H1 (cell line): ENCODE measurements at regions of chr9 and their contacts with region 1.

Region 1: GRCh38 chr9:83544002-83544698 is 5.9 kb upstream of the FRMD3 start:
- DNase-seq: no peak
- H3K4me3 ChIP-seq: no peak overlapping the region
- H3K27ac ChIP-seq: no peak overlapping the region
- H3K4me1 ChIP-seq: no peaks in the 10 kb centered on the region
- H3K27me3 ChIP-seq: peaks cover 6 to 21% (median 16%) of the 10 kb centered on the region in 4 experiments
- CTCF ChIP-seq: peak in 2 of 3 experiments; percentile 79 to 82; a peak in 3 of 4 replicates
- EP300 ChIP-seq: no peak
- POLR2A ChIP-seq: no peak
- RAD21 ChIP-seq: peak; percentile 86 to 91

Region 2: DNA sequence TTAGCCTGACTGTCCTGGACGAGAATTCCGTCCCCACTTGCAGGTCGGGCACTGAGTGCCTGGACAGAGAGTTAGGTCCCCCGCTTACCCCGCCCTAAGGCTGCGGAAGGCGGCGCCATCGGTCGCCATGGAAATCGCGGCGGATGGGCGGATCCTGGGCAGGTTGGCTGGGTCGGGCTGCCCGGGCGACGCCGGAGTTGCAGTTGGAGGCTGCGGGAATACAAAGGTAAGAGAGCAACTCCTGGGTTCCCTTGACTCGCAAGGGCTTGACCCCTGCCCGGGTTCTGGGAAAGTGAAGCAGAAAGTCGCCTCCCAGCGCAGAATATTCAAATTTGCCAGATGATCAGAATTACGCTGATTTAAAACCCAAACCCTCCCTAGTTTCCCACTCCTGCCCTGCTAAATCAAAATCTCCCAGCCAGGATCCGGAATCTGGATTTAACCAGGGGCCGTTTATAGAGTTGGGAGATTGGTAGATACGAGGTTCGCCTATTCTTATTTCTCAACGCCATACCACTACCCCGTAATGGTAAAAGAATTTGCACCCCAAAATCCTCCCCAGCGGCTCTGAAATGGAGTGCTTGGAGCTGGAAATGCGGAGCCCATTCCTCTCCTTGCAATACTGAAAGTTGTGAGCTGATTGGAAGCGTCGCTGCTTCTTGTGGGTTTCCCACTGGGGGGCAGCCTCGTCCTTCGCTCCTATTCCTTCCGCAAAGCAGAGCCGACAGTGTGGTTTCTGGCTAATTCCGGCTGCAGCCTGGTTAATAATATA is 324.8 kb before region 1 on chr9:
- CTCF ChIA-PET with region 1: interaction called, 34 read pairs
- POLR2A ChIA-PET with region 1: no interaction called
- DNase-seq: peak; percentile 79 to 93
- H3K4me3 ChIP-seq: peak overlapping the region; percentile 47 to 76 (median 66)
- H3K27ac ChIP-seq: no peak overlapping the region
- H3K4me1 ChIP-seq: peaks cover 0 to 3% (median 0%) of the 10 kb centered on the region in 4 experiments; a peak in 2 of 7 replicates
- H3K27me3 ChIP-seq: no peaks in the 10 kb centered on the region
- CTCF ChIP-seq: peak; percentile 65 to 86 (median 78)
- EP300 ChIP-seq: no peak
- POLR2A ChIP-seq: no peak
- RAD21 ChIP-seq: peak; percentile 94 to 97

Region 3: GRCh38 chr9:83362341-83362995 is 181.7 kb before region 1 on chr9:
- CTCF ChIA-PET with region 1: interaction called, 13 read pairs
- POLR2A ChIA-PET with region 1: no interaction called
- DNase-seq: no peak
- H3K4me3 ChIP-seq: no peak overlapping the region
- H3K27ac ChIP-seq: no peak overlapping the region
- H3K4me1 ChIP-seq: no peaks in the 10 kb centered on the region; a peak in 1 of 7 replicates
- H3K27me3 ChIP-seq: no peaks in the 10 kb centered on the region
- CTCF ChIP-seq: no peak
- EP300 ChIP-seq: no peak
- POLR2A ChIP-seq: no peak
- RAD21 ChIP-seq: no peak

Region 4: DNA sequence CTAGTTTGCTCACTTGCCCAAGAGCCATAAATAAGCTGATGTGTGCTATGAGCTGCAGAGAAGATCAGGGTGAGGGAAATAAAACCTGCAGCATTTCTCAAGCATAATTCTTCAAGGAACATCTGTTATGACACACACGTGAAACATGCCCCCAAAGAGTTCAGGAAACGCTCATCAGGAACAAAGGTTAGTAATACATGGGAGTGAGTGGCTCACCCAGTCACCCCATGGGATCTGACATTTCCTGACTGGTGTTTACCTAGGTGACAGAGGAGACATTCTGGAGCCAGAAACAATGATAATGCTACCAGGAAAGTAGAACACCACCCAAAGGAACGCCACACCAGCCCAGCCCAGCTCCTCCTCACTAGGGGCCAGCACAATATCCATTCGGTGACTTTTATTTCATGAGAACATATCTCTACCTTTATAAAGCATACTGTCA is 71.9 kb before region 1 on chr9:
- CTCF ChIA-PET with region 1: interaction called, 17 read pairs
- POLR2A ChIA-PET with region 1: no interaction called
- DNase-seq: no peak
- H3K4me3 ChIP-seq: no peak overlapping the region
- H3K27ac ChIP-seq: no peak overlapping the region
- H3K4me1 ChIP-seq: peaks cover 0 to 7% (median 3%) of the 10 kb centered on the region in 4 experiments; a peak in 3 of 7 replicates
- H3K27me3 ChIP-seq: no peaks in the 10 kb centered on the region; a peak in 1 of 7 replicates
- CTCF ChIP-seq: no peak
- EP300 ChIP-seq: no peak
- POLR2A ChIP-seq: no peak
- RAD21 ChIP-seq: no peak

Region 5: DNA sequence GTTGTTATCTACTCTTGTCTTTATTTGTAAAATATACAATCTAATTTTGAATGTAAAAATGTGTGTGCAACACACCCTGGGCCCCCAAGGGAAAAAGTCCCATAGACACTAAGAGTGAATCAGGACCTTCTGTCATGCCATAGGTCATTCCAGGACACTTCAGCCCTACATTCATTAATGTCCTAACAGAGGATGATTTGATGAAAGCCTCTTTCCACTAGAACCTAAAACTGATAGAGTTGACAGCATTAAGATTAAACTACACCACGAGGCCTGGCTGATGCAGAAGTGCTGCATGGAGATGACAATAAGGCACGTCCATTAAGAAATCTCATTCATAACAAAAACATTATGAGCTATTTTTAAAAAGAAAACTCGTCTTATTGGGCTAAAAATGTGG is 52.2 kb before region 1 on chr9:
- CTCF ChIA-PET with region 1: no interaction called
- POLR2A ChIA-PET with region 1: no interaction called
- DNase-seq: no peak
- H3K4me3 ChIP-seq: no peak overlapping the region
- H3K27ac ChIP-seq: no peak overlapping the region
- H3K4me1 ChIP-seq: no peaks in the 10 kb centered on the region
- H3K27me3 ChIP-seq: no peaks in the 10 kb centered on the region
- CTCF ChIP-seq: no peak
- EP300 ChIP-seq: no peak
- POLR2A ChIP-seq: no peak
- RAD21 ChIP-seq: no peak

Region 6: DNA sequence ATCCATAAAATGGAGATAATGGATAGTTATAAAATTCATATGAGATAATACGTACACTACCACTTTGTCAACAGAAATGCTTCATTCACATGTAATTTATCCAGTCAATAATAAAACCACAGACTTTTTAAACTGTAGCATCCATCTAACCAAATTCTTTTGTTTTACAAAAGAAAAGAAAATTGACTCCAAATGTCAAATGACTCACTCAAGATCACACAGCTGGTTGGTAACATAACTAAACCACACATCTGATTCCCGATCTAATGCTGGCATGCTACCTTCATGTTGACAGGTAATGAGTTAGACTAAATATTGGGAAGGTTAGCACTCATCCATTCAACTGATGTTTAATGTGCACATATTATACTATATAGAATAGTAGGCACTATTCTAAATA is 10.9 kb before region 1 on chr9:
- CTCF ChIA-PET with region 1: interaction called, 27 read pairs
- POLR2A ChIA-PET with region 1: no interaction called
- DNase-seq: no peak
- H3K4me3 ChIP-seq: no peak overlapping the region
- H3K27ac ChIP-seq: no peak overlapping the region
- H3K4me1 ChIP-seq: peaks cover 0 to 10% (median 4%) of the 10 kb centered on the region in 4 experiments; a peak in 6 of 7 replicates
- H3K27me3 ChIP-seq: peaks cover 12 to 21% (median 19%) of the 10 kb centered on the region in 4 experiments
- CTCF ChIP-seq: no peak
- EP300 ChIP-seq: no peak
- POLR2A ChIP-seq: no peak
- RAD21 ChIP-seq: no peak

Region 7: DNA sequence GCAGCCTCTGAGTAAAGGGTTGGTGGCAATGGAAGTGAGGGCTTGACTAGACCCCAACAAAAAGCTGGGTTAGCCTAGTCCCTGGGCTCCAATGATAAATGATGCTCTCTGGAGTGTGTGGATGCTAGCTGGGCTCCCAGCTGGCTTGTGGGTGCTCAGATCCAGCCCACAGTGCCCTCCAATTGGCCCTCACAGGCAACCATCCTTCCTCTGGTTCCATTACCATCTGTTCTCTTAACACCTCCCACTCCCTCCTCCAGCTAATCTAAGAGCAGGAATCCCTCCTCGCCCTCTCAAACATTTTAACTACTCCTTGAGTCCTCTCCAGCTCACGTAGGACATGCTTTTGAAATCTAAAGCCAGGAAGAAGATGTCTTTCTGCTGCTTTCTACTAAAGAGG is 19.2 kb after region 1 on chr9:
- CTCF ChIA-PET with region 1: interaction called, 42 read pairs
- POLR2A ChIA-PET with region 1: no interaction called
- DNase-seq: no peak
- H3K4me3 ChIP-seq: no peak overlapping the region
- H3K27ac ChIP-seq: no peak overlapping the region
- H3K4me1 ChIP-seq: no peaks in the 10 kb centered on the region
- H3K27me3 ChIP-seq: no peaks in the 10 kb centered on the region
- CTCF ChIP-seq: no peak
- EP300 ChIP-seq: no peak
- POLR2A ChIP-seq: no peak
- RAD21 ChIP-seq: no peak

Region 8: GRCh38 chr9:83596896-83597504 is 52.9 kb after region 1 on chr9:
- CTCF ChIA-PET with region 1: interaction called, 25 read pairs
- POLR2A ChIA-PET with region 1: no interaction called
- DNase-seq: peak in 1 of 2 experiments; percentile 87
- H3K4me3 ChIP-seq: no peak overlapping the region
- H3K27ac ChIP-seq: no peak overlapping the region
- H3K4me1 ChIP-seq: no peaks in the 10 kb centered on the region
- H3K27me3 ChIP-seq: no peaks in the 10 kb centered on the region
- CTCF ChIP-seq: peak; percentile 43 to 76 (median 71)
- EP300 ChIP-seq: no peak
- POLR2A ChIP-seq: no peak
- RAD21 ChIP-seq: peak; percentile 83 to 89

Region 9: GRCh38 chr9:83765376-83765775 is 221.2 kb after region 1 on chr9:
- CTCF ChIA-PET with region 1: no interaction called
- POLR2A ChIA-PET with region 1: no interaction called
- DNase-seq: no peak
- H3K4me3 ChIP-seq: no peak overlapping the region
- H3K27ac ChIP-seq: no peak overlapping the region
- H3K4me1 ChIP-seq: no peaks in the 10 kb centered on the region
- H3K27me3 ChIP-seq: no peaks in the 10 kb centered on the region
- CTCF ChIP-seq: no peak
- EP300 ChIP-seq: no peak
- POLR2A ChIP-seq: no peak
- RAD21 ChIP-seq: no peak